CD8-positive, alpha-beta T cell (primary cell): ENCODE measurements at regions of chr15 and their contacts with region 1.

Region 1: DNA sequence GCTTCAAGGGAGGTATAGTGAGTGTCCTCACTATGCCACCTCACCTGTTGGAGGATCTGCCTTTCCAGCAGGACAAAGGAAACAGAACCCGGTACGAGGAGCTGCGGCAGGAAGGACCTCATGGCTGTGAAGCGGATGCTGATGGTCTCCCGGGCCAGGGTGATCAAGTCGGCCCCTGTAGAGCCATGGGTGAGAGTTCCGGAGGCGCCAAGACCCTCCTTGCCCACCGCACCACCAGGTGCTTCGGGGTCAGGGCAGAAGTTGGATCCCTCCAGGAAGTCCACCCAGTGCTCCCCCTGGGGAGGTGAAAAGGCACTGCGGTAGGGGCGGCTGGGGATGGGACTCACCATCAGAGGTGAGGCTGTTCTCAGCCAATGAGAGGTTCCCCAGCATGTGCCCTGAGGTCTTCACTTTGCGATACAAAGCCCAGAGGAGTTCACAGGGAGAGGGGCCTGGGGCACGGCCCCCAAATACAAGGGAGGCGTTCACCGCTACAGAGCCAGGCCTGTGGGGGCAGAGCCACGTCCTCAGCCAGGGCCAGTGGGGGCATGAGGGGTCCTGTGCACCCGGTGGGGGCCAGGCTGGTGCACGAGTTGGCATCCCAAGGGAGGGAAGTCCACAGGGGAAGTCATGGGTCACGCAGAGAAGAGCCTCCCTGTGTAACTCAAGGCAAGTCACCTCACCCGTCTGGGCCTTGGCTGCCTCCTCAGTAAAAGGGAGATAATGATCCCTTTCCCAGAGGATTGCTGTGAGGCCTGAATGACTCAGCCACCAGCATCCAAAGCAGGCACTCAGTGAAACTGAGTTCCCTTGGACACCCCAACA is 27.7 kb downstream of the C15orf39 start:
- DNase-seq: no peak
- ATAC-seq: no peak
- H3K4me3 ChIP-seq: no peak overlapping the region
- H3K4me3 Mint-ChIP-seq: no peak overlapping the region
- H3K27ac ChIP-seq: no peak overlapping the region
- H3K27ac Mint-ChIP-seq: no peak overlapping the region
- H3K4me1 ChIP-seq: no peaks in the 10 kb centered on the region
- H3K4me1 Mint-ChIP-seq: no peaks in the 10 kb centered on the region
- H3K27me3 ChIP-seq: no peaks in the 10 kb centered on the region
- H3K27me3 Mint-ChIP-seq: peaks cover 8% of the 10 kb centered on the region
- CTCF ChIP-seq: no peak

Region 2: DNA sequence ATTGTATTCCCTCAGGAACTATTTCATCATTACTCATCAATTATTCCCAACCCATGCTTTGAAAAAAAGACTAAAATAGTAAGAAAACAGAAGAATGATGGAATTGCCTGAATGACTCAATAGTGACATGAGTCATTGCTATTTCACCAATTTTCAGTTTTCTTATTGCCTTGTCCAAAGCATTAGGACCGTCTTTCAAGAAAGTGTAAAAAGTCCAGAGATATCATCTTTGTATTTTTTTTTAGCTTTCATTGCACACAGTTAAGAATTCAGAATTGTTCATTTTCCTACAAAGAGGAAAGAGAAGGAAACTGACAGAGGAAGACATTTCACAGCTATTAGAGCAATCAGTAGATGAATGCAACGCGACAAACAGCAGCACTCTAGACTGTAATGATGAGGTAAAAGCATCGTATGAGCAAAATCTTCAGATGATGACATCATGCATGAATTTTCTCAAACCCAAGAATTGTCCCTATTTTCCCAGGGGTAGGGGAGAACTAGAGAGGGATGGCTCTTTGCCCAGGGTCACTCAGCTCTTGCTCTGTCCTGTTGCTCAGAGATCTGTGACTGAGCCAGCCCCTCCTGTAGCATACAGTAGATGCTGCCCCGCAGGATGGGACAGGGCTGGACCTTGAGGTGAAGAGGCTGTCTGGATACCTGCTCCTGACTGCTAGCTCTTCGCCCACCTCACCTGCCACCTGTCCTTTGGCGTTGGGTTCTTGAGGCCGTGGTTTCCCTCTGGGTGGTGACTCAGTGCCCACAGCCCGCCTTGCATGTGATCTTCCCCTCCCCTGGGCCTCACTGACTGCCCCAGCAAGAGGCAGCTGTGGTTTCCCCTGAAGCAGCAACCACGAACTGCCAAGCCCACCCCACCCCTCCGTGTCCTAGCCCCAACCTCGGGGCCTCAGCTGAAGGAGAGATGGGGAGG is 121.2 kb before region 1 on chr15:
- CTCF ChIA-PET with region 1: no interaction called
- POLR2A ChIA-PET with region 1: no interaction called
- intact Hi-C with region 1: no loop called
- DNase-seq: peak; percentile 28 to 79 (median 63)
- ATAC-seq: peak; percentile 83
- H3K4me3 ChIP-seq: no peak overlapping the region
- H3K4me3 Mint-ChIP-seq: peak overlapping the region; percentile 26
- H3K27ac ChIP-seq: no peak overlapping the region
- H3K27ac Mint-ChIP-seq: peak overlapping the region; percentile 53
- H3K4me1 ChIP-seq: peaks cover 19% of the 10 kb centered on the region
- H3K4me1 Mint-ChIP-seq: peaks cover 24% of the 10 kb centered on the region
- H3K27me3 ChIP-seq: no peaks in the 10 kb centered on the region
- H3K27me3 Mint-ChIP-seq: peaks cover 5% of the 10 kb centered on the region
- CTCF ChIP-seq: no peak

Region 3: GRCh38 chr15:75167588-75168350 is 61.6 kb before region 1 on chr15:
- CTCF ChIA-PET with region 1: no interaction called
- POLR2A ChIA-PET with region 1: no interaction called
- intact Hi-C with region 1: no loop called
- DNase-seq: peak in 1 of 9 experiments; percentile 22
- ATAC-seq: no peak
- H3K4me3 ChIP-seq: no peak overlapping the region
- H3K4me3 Mint-ChIP-seq: no peak overlapping the region
- H3K27ac ChIP-seq: no peak overlapping the region
- H3K27ac Mint-ChIP-seq: no peak overlapping the region
- H3K4me1 ChIP-seq: no peaks in the 10 kb centered on the region
- H3K4me1 Mint-ChIP-seq: peaks cover 3% of the 10 kb centered on the region
- H3K27me3 ChIP-seq: no peaks in the 10 kb centered on the region
- H3K27me3 Mint-ChIP-seq: peaks cover 3% of the 10 kb centered on the region
- CTCF ChIP-seq: no peak

Region 4: DNA sequence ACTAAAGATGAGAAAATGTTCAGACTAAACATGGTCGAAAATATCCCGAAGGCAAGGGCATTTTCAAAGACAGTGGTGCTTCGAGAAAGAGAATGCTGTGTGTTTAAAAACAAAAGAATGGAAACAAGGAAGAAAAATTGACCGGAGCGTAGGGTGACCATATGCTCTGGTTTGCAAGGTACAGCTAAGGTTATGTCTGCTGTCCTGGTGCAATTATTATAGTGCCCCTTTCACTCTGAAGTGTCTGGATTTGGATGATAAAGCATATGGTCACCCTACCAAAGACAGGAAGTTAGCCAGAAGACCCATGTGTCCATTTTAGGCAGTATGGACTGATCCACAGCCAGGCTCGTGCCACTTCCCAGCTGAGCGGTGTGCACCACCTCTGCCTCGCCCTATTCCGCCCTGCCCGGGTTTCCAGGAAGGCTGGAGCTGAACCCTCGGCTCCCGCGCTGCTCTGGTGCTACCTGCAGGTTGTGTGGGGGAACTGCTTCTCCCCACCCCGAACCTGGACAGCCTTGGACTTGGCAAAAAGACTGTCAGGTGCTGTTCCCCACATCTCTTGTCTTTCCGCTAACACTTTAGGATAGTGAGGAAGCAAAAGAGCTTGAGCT is 78.5 kb after region 1 on chr15:
- CTCF ChIA-PET with region 1: no interaction called
- POLR2A ChIA-PET with region 1: no interaction called
- intact Hi-C with region 1: loop called in 1 of 2 experiments (anchors 5 kb)
- DNase-seq: no peak
- ATAC-seq: no peak
- H3K4me3 ChIP-seq: no peak overlapping the region
- H3K4me3 Mint-ChIP-seq: no peak overlapping the region
- H3K27ac ChIP-seq: no peak overlapping the region
- H3K27ac Mint-ChIP-seq: no peak overlapping the region
- H3K4me1 ChIP-seq: no peaks in the 10 kb centered on the region
- H3K4me1 Mint-ChIP-seq: no peaks in the 10 kb centered on the region
- H3K27me3 ChIP-seq: no peaks in the 10 kb centered on the region
- H3K27me3 Mint-ChIP-seq: peaks cover 17% of the 10 kb centered on the region
- CTCF ChIP-seq: peak; percentile 14